WTC11 (cell line): ENCODE measurements at regions of chr3 and their contacts with region 1.

Region 1: GRCh38 chr3:33074217-33075067 is 22.5 kb downstream of the GLB1 start:
- DNase-seq: peak; percentile 79
- ATAC-seq: peak; percentile 88
- H3K4me3 Mint-ChIP-seq: no peak overlapping the region
- H3K27ac Mint-ChIP-seq: no peak overlapping the region; the same call in 1 of the 2 replicates
- H3K4me1 Mint-ChIP-seq: peaks cover 7% of the 10 kb centered on the region
- H3K27me3 Mint-ChIP-seq: no peaks in the 10 kb centered on the region
- CTCF ChIP-seq: peak; percentile 70

Region 2: DNA sequence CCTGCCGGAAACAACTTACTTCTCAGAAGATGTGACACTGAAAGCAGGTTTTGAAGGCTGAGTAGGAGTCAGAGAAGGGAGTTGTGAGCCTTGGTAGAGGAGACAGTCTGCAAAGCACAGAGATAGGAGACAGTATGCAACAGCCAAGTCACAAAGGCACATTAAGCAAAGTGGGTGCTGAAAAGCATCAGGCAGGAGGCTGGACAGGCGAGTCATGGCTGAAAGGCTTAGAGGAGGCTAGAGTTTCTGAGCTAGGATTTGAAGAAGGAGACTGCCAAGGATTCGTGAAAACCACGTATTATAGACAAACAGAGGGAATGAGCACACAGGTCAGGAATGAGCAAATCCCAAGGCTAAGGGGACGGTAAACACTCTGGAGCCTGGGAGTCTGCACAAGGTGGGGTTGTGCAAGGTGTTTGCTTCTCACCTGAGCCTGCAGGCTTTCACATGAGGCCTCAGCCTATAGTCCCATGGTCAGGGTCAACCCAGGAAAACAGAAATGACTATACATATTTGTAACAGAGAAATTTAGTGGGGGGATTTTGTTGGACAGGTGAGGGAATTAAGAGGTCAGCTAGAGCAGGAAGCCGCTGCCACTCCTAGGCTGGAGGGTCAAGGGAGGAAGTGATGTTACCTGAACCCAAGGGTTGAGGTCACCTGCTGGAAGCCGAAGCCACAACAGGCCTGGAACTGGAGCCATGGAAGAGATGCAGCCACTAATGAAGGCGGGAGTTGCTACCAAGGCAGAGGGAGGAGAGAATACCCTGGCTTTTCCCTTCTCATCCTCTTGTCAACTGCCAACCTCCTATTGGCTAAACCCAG is 279.7 kb before region 1 on chr3:
- CTCF ChIA-PET with region 1: no interaction called
- POLR2A ChIA-PET with region 1: no interaction called
- DNase-seq: no peak
- ATAC-seq: peak; percentile 51
- H3K4me3 Mint-ChIP-seq: no peak overlapping the region
- H3K27ac Mint-ChIP-seq: no peak overlapping the region
- H3K4me1 Mint-ChIP-seq: peaks cover 37% of the 10 kb centered on the region
- H3K27me3 Mint-ChIP-seq: peaks cover 4% of the 10 kb centered on the region; the same call in 1 of the 2 replicates
- CTCF ChIP-seq: no peak

Region 3: DNA sequence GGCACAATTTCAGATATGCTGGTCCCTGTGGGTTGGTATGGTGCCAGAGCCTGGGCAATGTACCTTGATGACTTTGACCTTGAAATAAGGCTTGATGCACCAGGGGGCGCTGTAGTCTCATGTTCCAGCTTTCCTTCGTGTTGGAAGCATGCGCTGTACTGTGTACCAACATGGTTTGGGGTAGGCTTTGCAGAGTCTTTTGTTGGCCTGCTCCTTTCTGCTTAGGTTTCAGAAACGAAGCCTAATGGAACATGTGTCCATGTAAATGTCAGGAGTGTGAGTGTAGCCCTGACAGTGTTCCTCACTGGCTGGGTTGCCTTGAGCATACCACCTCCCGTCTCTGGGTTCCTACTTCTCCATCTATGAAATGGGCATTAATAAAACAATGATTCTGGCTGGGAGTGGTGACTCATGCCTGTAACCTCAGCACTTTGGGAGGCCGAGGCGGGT is 126.6 kb before region 1 on chr3:
- CTCF ChIA-PET with region 1: interaction called, 36 read pairs
- POLR2A ChIA-PET with region 1: no interaction called
- DNase-seq: peak; percentile 95
- ATAC-seq: peak; percentile 97
- H3K4me3 Mint-ChIP-seq: no peak overlapping the region
- H3K27ac Mint-ChIP-seq: no peak overlapping the region
- H3K4me1 Mint-ChIP-seq: no peaks in the 10 kb centered on the region
- H3K27me3 Mint-ChIP-seq: peaks cover 7% of the 10 kb centered on the region; the same call in 1 of the 2 replicates
- CTCF ChIP-seq: peak; percentile 89

Region 4: GRCh38 chr3:33060609-33061337 is 13.7 kb before region 1 on chr3:
- CTCF ChIA-PET with region 1: interaction called, 12 read pairs
- POLR2A ChIA-PET with region 1: no interaction called
- DNase-seq: no peak
- ATAC-seq: no peak
- H3K4me3 Mint-ChIP-seq: no peak overlapping the region
- H3K27ac Mint-ChIP-seq: no peak overlapping the region
- H3K4me1 Mint-ChIP-seq: no peaks in the 10 kb centered on the region
- H3K27me3 Mint-ChIP-seq: no peaks in the 10 kb centered on the region
- CTCF ChIP-seq: no peak

Region 5: DNA sequence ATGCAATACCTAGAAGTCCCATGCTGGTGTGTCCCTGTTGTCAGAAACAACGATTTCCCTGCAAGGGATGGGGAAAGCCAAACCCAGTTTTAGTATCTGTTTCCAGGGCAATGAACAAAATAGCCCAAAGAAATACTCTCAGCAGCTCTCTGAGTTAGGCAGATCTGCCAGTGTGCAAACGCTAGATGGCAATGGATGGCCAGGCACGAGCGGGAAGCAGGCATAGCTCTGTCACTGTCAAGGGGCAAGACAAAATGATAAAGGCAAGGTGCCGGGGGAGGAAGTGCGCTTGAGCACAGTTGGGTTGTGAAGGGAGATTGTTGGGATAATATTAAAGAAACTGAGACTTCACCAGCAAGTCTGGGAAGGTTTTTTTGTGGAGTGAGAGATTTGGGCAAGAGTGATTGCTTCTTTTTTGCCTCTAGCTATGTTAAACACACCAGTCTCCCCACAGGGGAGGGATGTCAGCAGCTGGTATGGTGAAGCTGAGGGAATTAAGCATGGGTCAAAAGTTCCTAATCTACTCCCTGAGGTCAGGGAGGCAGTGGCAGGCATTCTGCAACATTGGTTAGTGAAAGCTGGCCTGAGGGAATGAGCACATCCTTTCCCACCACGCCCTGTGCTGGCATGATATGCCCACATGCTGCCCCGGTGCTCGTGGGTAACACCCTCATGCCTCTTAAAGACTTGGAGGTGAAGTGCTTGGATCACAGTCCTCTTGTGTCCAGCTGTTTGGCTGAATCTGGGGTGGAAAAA is 841.5 kb after region 1 on chr3:
- CTCF ChIA-PET with region 1: no interaction called
- POLR2A ChIA-PET with region 1: no interaction called
- DNase-seq: peak; percentile 25
- ATAC-seq: peak; percentile 73
- H3K4me3 Mint-ChIP-seq: no peak overlapping the region
- H3K27ac Mint-ChIP-seq: no peak overlapping the region
- H3K4me1 Mint-ChIP-seq: peaks cover 17% of the 10 kb centered on the region
- H3K27me3 Mint-ChIP-seq: no peaks in the 10 kb centered on the region
- CTCF ChIP-seq: no peak